ENCODE measurements at regions of chr11 and their contacts with region 1.

Region 1: GRCh38 chr11:129285402-129285786 is 90.3 kb upstream of the BARX2 start:
- DNase-seq: no peak
- ATAC-seq: no peak
- H3K4me3 ChIP-seq: no peak overlapping the region
- H3K27ac ChIP-seq: peak overlapping the region; percentile 17; the same call in 1 of the 2 replicates
- H3K4me1 ChIP-seq: peaks cover 57% of the 10 kb centered on the region
- H3K27me3 ChIP-seq: no peaks in the 10 kb centered on the region
- CTCF ChIP-seq: no peak

Region 2: DNA sequence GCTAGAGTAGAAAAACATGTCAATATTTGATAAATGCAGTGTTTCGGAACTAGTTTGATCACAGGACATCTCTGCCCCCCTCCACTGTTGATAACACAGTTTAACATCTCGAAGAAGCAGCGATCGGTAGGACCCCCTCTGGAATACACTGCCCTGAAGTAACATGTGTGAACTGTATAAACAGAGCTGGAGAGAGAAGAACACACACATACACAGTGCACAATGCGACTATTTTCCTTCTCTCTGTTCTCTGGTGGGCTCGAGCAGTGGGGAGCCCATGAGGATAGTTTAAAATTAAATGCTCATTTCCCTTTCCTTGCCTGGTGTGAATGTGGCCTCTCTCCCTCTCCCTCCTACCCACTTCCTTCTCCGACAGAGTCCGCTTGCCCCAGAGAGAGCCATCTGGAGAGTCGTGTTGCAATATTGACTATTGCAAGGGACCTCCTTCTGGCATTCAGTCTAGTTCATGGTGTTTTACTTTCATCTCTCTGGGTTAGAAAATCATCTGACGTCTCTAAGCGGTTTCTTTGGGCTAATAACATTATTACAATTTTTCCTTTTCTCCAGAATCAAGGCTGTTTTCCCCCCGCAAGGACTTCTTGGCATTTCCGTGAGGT is 38.6 kb after region 1 on chr11:
- CTCF ChIA-PET with region 1: no interaction called
- POLR2A ChIA-PET with region 1: no interaction called
- intact Hi-C with region 1: loop called (anchors 2 kb)
- DNase-seq: no peak
- ATAC-seq: no peak
- H3K4me3 ChIP-seq: no peak overlapping the region
- H3K27ac ChIP-seq: peak overlapping the region; percentile 60
- H3K4me1 ChIP-seq: peaks cover 14% of the 10 kb centered on the region
- H3K27me3 ChIP-seq: no peaks in the 10 kb centered on the region
- CTCF ChIP-seq: no peak